Activated B cell treated with CpG ODN at 0.5 μM for 24 hours (primary cell): ENCODE measurements at regions of chr16 and their contacts with region 1.

Region 1: GRCh38 chr16:86563489-86564345 is 2.9 kb upstream of the FOXC2 start:
- DNase-seq: peak; percentile 72
- ATAC-seq: peak; percentile 99
- H3K4me3 Mint-ChIP-seq: peak overlapping the region; percentile 64
- H3K27ac Mint-ChIP-seq: no peak overlapping the region
- H3K4me1 Mint-ChIP-seq: peaks cover 25% of the 10 kb centered on the region
- H3K27me3 Mint-ChIP-seq: peaks cover 32% of the 10 kb centered on the region
- CTCF ChIP-seq: peak; percentile 95

Region 2: GRCh38 chr16:86508947-86509758 is 54.6 kb before region 1 on chr16:
- CTCF ChIA-PET with region 1: no interaction called
- POLR2A ChIA-PET with region 1: interaction called, 3 read pairs
- intact Hi-C with region 1: loop called (anchors 5 kb)
- DNase-seq: peak; percentile 46
- ATAC-seq: peak; percentile 57
- H3K4me3 Mint-ChIP-seq: peak overlapping the region; percentile 82
- H3K27ac Mint-ChIP-seq: peak overlapping the region; percentile 41
- H3K4me1 Mint-ChIP-seq: peaks cover 29% of the 10 kb centered on the region
- H3K27me3 Mint-ChIP-seq: peaks cover 57% of the 10 kb centered on the region
- CTCF ChIP-seq: no peak

Region 3: GRCh38 chr16:86874141-86874540 is 310.4 kb after region 1 on chr16:
- CTCF ChIA-PET with region 1: no interaction called
- POLR2A ChIA-PET with region 1: no interaction called
- intact Hi-C with region 1: loop called (anchors 5 kb)
- DNase-seq: no peak
- ATAC-seq: peak; percentile 25
- H3K4me3 Mint-ChIP-seq: no peak overlapping the region
- H3K27ac Mint-ChIP-seq: no peak overlapping the region
- H3K4me1 Mint-ChIP-seq: no peaks in the 10 kb centered on the region
- H3K27me3 Mint-ChIP-seq: peaks cover 18% of the 10 kb centered on the region
- CTCF ChIP-seq: no peak

Region 4: GRCh38 chr16:86884390-86884650 is 320.6 kb after region 1 on chr16:
- CTCF ChIA-PET with region 1: no interaction called
- POLR2A ChIA-PET with region 1: no interaction called
- intact Hi-C with region 1: no loop called
- DNase-seq: no peak
- ATAC-seq: no peak
- H3K4me3 Mint-ChIP-seq: no peak overlapping the region
- H3K27ac Mint-ChIP-seq: no peak overlapping the region
- H3K4me1 Mint-ChIP-seq: no peaks in the 10 kb centered on the region
- H3K27me3 Mint-ChIP-seq: peaks cover 20% of the 10 kb centered on the region
- CTCF ChIP-seq: no peak

Region 5: GRCh38 chr16:87076950-87077749 is 513.4 kb after region 1 on chr16:
- CTCF ChIA-PET with region 1: no interaction called
- POLR2A ChIA-PET with region 1: no interaction called
- intact Hi-C with region 1: loop called (anchors 1 kb)
- DNase-seq: no peak
- ATAC-seq: peak; percentile 52
- H3K4me3 Mint-ChIP-seq: no peak overlapping the region
- H3K27ac Mint-ChIP-seq: no peak overlapping the region
- H3K4me1 Mint-ChIP-seq: peaks cover 6% of the 10 kb centered on the region
- H3K27me3 Mint-ChIP-seq: peaks cover 2% of the 10 kb centered on the region
- CTCF ChIP-seq: no peak

Region 6: GRCh38 chr16:87297918-87298631 is 734.4 kb after region 1 on chr16:
- CTCF ChIA-PET with region 1: interaction called, 3 read pairs
- POLR2A ChIA-PET with region 1: no interaction called
- intact Hi-C with region 1: loop called (anchors 5 kb)
- DNase-seq: no peak
- ATAC-seq: no peak
- H3K4me3 Mint-ChIP-seq: no peak overlapping the region
- H3K27ac Mint-ChIP-seq: no peak overlapping the region
- H3K4me1 Mint-ChIP-seq: no peaks in the 10 kb centered on the region
- H3K27me3 Mint-ChIP-seq: no peaks in the 10 kb centered on the region
- CTCF ChIP-seq: no peak

Region 7: DNA sequence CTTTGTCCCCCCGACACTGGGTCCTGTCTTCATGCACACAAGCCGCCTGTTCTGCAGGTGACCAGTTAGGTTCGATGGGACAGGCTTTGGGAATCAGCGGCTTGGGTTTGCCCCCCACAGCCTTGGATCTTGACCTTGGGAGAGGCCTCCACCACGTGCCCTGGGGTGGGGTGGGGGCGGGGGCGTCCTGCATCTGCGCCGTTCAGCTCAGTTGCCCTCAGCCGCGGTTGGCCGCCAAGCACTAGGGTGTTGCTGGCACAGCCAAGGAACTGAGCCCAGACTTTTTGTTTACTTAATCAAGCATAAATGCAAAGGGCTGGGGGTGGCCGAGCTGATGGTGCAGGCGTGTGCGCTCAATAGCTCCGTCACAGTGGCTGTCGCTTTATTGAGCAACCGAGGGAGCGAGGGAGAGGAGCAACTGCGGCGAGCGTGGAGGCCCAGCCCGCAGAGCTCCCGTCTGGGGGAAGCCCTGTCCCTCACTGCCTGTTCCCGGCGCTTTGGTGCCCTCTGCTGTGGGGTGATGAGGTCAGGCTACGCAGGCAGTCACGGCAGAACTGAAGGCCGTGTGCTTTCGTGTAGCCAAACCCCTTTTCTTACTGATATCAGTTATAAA is 1072.5 kb after region 1 on chr16:
- CTCF ChIA-PET with region 1: interaction called, 8 read pairs
- POLR2A ChIA-PET with region 1: no interaction called
- intact Hi-C with region 1: loop called (anchors 1 kb)
- DNase-seq: peak; percentile 69
- ATAC-seq: peak; percentile 90
- H3K4me3 Mint-ChIP-seq: peak overlapping the region; percentile 84
- H3K27ac Mint-ChIP-seq: peak overlapping the region; percentile 69
- H3K4me1 Mint-ChIP-seq: peaks cover 24% of the 10 kb centered on the region
- H3K27me3 Mint-ChIP-seq: peaks cover 19% of the 10 kb centered on the region
- CTCF ChIP-seq: peak; percentile 4